CD4-positive, alpha-beta T cell (primary cell): ENCODE measurements at regions of chr2 and their contacts with region 1.

Region 1: GRCh38 chr2:30185186-30185585 is 38.4 kb downstream of the YPEL5 start:
- DNase-seq: no peak
- ATAC-seq: no peak
- H3K4me3 ChIP-seq: no peak overlapping the region
- H3K4me3 Mint-ChIP-seq: no peak overlapping the region
- H3K27ac ChIP-seq: no peak overlapping the region
- H3K27ac Mint-ChIP-seq: no peak overlapping the region
- H3K4me1 ChIP-seq: no peaks in the 10 kb centered on the region
- H3K4me1 Mint-ChIP-seq: no peaks in the 10 kb centered on the region
- H3K27me3 ChIP-seq: no peaks in the 10 kb centered on the region
- H3K27me3 Mint-ChIP-seq: no peaks in the 10 kb centered on the region
- CTCF ChIP-seq: no peak

Region 2: GRCh38 chr2:30691948-30692828 is 507.0 kb after region 1 on chr2:
- CTCF ChIA-PET with region 1: no interaction called
- POLR2A ChIA-PET with region 1: no interaction called
- intact Hi-C with region 1: loop called in 1 of 2 experiments (anchors 5 kb)
- DNase-seq: no peak
- ATAC-seq: no peak
- H3K4me3 ChIP-seq: no peak overlapping the region
- H3K4me3 Mint-ChIP-seq: no peak overlapping the region
- H3K27ac ChIP-seq: no peak overlapping the region
- H3K27ac Mint-ChIP-seq: no peak overlapping the region
- H3K4me1 ChIP-seq: no peaks in the 10 kb centered on the region
- H3K4me1 Mint-ChIP-seq: no peaks in the 10 kb centered on the region
- H3K27me3 ChIP-seq: peaks cover 0 to 3% of the 10 kb centered on the region in 2 experiments
- H3K27me3 Mint-ChIP-seq: peaks cover 5% of the 10 kb centered on the region
- CTCF ChIP-seq: no peak